ENCODE measurements at regions of chr7 and their contacts with region 1.

Region 1: GRCh38 chr7:97872025-97872669 is at the start of gene ASNS:
- DNase-seq: peak; percentile 86
- ATAC-seq: peak; percentile 92
- H3K4me3 Mint-ChIP-seq: peak within 1 kb of the TSS; percentile 89
- H3K27ac Mint-ChIP-seq: peak within 1 kb of the TSS; percentile 90
- H3K4me1 Mint-ChIP-seq: peaks cover 13% of the 10 kb centered on the region
- H3K27me3 Mint-ChIP-seq: no peaks in the 10 kb centered on the region
- CTCF ChIP-seq: no peak
- total RNA-seq, gene ASNS: 92.1 and 101 TPM in 2 replicates

Region 2: GRCh38 chr7:96327429-96327828 is 1544.7 kb before region 1 on chr7:
- CTCF ChIA-PET with region 1: no interaction called
- POLR2A ChIA-PET with region 1: no interaction called
- intact Hi-C with region 1: loop called (anchors 2 kb)
- DNase-seq: no peak
- ATAC-seq: no peak
- H3K4me3 Mint-ChIP-seq: no peak overlapping the region
- H3K27ac Mint-ChIP-seq: peak overlapping the region; percentile 87
- H3K4me1 Mint-ChIP-seq: peaks cover 18% of the 10 kb centered on the region
- H3K27me3 Mint-ChIP-seq: peaks cover 3% of the 10 kb centered on the region
- CTCF ChIP-seq: no peak

Region 3: DNA sequence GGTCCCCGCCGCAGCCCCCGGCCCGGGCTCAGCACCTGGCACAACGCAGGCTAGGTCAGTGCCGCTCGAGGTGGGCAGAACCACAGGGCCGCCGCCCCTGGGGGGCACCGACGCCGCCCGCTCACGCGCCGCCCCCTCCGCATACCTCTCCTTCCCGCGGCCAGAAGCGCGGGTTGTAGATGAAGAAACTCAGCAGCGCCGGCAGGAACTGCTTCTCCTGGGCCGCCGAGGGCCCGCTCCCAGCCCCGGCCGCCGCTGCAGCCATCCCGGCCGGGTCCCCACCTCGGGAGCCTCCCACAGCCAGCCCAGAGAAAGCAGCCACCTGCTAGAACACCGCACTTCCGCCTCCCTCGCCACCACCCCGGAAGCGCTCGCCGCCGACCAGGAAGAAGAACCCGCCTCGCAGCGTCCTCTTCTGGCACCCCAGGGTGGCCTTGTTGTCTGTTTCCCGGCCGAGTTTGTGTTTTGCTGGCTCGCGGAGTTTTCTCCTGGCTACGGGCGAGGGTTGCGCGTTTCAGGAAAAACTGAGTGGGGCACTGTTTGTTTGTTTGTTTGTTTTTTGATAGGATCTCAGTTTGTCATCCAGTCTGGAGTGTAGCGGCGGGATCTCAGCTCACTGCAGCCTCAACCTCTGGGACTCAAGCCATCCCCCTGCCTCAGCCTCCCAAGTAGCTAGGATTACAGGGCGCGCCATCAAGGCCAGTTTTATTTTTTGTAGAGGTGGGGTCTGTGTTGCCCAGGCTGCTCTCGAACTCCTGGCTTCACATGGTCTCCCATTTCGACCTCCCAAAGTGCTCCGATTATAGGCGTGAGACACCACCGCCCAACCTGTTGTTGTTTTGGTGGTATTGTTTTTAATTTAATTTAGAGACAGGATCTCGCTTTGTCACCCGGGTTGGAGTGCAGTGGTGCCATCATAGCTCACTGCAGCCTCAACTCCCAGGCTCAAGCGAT is 100.1 kb after region 1 on chr7:
- CTCF ChIA-PET with region 1: no interaction called
- POLR2A ChIA-PET with region 1: interaction called, 5 read pairs
- intact Hi-C with region 1: loop called (anchors 1 kb)
- DNase-seq: peak; percentile 75
- ATAC-seq: peak; percentile 92
- H3K4me3 Mint-ChIP-seq: peak overlapping the region; percentile 92
- H3K27ac Mint-ChIP-seq: peak overlapping the region; percentile 91
- H3K4me1 Mint-ChIP-seq: peaks cover 22% of the 10 kb centered on the region
- H3K27me3 Mint-ChIP-seq: peaks cover 2% of the 10 kb centered on the region
- CTCF ChIP-seq: no peak

Region 4: GRCh38 chr7:98014352-98014751 is 142.2 kb after region 1 on chr7:
- CTCF ChIA-PET with region 1: no interaction called
- POLR2A ChIA-PET with region 1: no interaction called
- intact Hi-C with region 1: no loop called
- DNase-seq: no peak
- ATAC-seq: no peak
- H3K4me3 Mint-ChIP-seq: no peak overlapping the region
- H3K27ac Mint-ChIP-seq: no peak overlapping the region
- H3K4me1 Mint-ChIP-seq: no peaks in the 10 kb centered on the region
- H3K27me3 Mint-ChIP-seq: peaks cover 12% of the 10 kb centered on the region
- CTCF ChIP-seq: no peak

Region 5: DNA sequence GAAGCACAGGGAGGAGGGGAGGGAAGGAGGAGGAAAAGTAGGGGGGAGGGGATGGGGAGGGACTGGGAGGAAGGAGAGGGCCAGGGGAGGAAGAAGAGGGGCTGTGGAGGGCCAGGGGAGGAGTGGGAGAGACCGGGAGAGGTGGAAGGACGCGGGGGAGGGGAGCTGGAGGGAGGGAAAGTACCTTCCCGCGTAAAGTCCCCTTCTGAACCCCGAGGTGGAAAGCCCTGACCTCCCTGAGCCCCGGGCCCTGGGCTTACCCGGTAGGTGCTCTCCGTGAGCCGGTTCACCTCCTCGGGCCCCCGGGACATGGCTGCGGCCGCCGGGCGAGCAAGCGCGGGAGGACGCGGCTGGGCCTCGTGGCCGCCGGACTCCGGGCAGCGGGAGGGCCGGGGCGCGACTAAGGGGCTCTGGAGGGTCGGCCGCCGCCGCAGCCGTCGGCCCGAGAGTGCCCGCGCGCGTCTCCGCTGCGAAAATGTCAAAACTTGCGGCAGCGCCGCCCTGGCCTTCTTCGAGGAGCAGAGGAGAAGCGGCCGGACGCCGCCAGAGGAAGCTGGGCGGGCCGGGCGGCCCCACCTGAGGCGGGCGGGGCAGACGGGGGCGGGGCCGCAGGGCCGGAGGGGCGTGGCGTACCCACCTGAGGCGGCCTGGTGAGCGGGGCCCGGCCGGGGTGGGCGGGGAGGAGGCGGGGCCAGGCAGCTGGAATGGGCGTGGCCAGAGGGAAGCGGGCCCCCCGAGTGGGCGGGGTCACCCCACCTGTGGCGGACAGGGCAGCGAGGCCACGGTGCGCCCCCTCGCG is 528.6 kb after region 1 on chr7 and contains the start of gene BAIAP2L1:
- CTCF ChIA-PET with region 1: no interaction called
- POLR2A ChIA-PET with region 1: no interaction called
- intact Hi-C with region 1: loop called (anchors 2 kb)
- DNase-seq: peak; percentile 87
- ATAC-seq: peak; percentile 92
- H3K4me3 Mint-ChIP-seq: peak within 1 kb of the TSS; percentile 76
- H3K27ac Mint-ChIP-seq: peak within 1 kb of the TSS; percentile 35
- H3K4me1 Mint-ChIP-seq: peaks cover 27% of the 10 kb centered on the region
- H3K27me3 Mint-ChIP-seq: peaks cover 26% of the 10 kb centered on the region
- CTCF ChIP-seq: no peak
- total RNA-seq, gene BAIAP2L1: 8.1 and 10.4 TPM in 2 replicates